CD8-positive, alpha-beta memory T cell (primary cell): ENCODE measurements at regions of chr12 and their contacts with region 1.

Region 1: GRCh38 chr12:110449799-110450497 is at the start of gene ARPC3:
- DNase-seq: peak; percentile 93 to 96 (median 93)
- H3K4me3 ChIP-seq: peak within 1 kb of the TSS; percentile 67
- H3K4me3 Mint-ChIP-seq: peak within 1 kb of the TSS; percentile 94 to 100 (median 99)
- H3K27ac ChIP-seq: peak within 1 kb of the TSS; percentile 88
- H3K27ac Mint-ChIP-seq: peak within 1 kb of the TSS; percentile 86 to 100 (median 99)
- H3K4me1 ChIP-seq: peaks cover 14% of the 10 kb centered on the region
- H3K4me1 Mint-ChIP-seq: peaks cover 33 to 50% (median 46%) of the 10 kb centered on the region in 3 donors
- H3K27me3 ChIP-seq: no peaks in the 10 kb centered on the region
- H3K27me3 Mint-ChIP-seq: peaks cover 0 to 4% of the 10 kb centered on the region in 2 donors
- total RNA-seq, gene ARPC3: 266 to 293 TPM

Region 2: DNA sequence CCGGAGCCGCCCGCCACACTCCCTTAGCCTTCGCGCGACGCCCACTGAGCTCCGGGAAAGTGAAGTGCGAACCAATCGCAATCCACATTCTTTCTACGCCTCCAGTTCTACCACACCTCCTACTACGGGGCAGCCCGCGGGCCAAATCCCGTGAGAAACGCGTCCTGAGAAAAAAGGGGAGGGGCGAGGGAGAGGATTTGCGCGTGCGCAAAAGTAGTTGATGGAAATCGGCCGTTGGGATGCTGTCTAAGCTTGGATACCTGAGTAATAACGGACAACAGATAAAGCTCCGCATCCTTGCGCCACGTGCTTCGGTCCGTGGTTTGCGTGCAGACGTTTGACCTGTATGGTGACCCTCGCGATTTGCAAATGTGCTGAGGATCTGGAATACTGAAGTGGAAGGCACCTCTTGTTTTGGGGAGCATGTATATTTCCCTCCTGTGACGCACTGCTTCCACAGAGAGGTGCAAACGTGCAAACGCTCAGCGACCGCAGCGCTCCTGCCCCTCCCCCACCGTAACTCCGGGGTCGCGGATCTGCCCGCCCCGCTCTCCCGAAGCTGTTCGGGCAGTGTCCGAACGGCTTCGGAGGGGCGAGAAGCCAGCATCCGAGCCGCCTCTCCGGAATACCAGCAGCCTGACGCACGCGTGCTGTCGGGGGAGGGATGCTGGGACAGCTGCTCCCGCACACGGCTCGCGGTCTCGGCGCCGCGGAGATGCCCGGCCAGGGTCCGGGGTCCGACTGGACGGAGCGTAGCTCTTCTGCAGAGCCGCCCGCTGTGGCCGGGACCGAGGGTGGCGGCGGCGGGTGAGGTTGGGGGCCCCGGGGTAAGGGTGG is 18.5 kb after region 1 on chr12 and contains the starts of genes FAM216A and GPN3:
- CTCF ChIA-PET with region 1: interaction called, 100 read pairs
- POLR2A ChIA-PET with region 1: interaction called, 42 read pairs
- DNase-seq: peak; percentile 90 to 98 (median 96)
- H3K4me3 ChIP-seq: peak within 1 kb of the TSS; percentile 93
- H3K4me3 Mint-ChIP-seq: peak within 1 kb of the TSS; percentile 92 to 99 (median 98)
- H3K27ac ChIP-seq: peak within 1 kb of the TSS; percentile 78
- H3K27ac Mint-ChIP-seq: peak within 1 kb of the TSS; percentile 82 to 99 (median 98)
- H3K4me1 ChIP-seq: peaks cover 25% of the 10 kb centered on the region
- H3K4me1 Mint-ChIP-seq: peaks cover 18 to 45% (median 37%) of the 10 kb centered on the region in 3 donors
- H3K27me3 ChIP-seq: no peaks in the 10 kb centered on the region
- H3K27me3 Mint-ChIP-seq: peaks cover 0 to 2% of the 10 kb centered on the region in 2 donors
- total RNA-seq, gene FAM216A: 43.2 to 44.0 TPM
- total RNA-seq, gene GPN3: 59.4 TPM

Region 3: DNA sequence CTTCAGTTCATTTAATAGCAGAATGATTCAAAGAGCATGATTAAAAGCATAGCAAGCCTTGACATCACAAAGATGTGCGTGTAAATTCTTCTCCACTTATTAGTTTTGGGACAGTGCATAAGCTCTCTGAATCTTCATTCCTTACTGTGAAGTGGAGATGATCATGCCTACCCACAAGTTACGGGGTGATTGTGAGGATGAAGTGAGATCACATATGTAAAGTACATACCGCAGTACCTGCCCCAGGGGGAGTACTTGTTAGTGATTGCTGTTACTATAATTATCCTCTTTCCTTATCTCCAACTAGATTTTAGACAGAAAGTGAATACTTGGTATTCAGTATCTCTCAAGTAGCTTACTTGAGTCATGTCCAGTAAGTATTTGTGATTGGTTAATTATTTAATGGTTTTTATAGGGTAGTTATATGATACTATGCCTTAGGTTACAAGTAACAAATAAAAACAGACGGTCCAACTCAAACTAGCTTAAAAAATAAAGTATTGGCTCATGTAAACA is 58.2 kb after region 1 on chr12:
- CTCF ChIA-PET with region 1: interaction called, 12 read pairs
- POLR2A ChIA-PET with region 1: interaction called, 3 read pairs
- DNase-seq: no peak
- H3K4me3 ChIP-seq: no peak overlapping the region
- H3K4me3 Mint-ChIP-seq: no peak overlapping the region
- H3K27ac ChIP-seq: no peak overlapping the region
- H3K27ac Mint-ChIP-seq: no peak overlapping the region
- H3K4me1 ChIP-seq: no peaks in the 10 kb centered on the region
- H3K4me1 Mint-ChIP-seq: peaks cover 0 to 3% (median 0%) of the 10 kb centered on the region in 3 donors
- H3K27me3 ChIP-seq: no peaks in the 10 kb centered on the region
- H3K27me3 Mint-ChIP-seq: no peaks in the 10 kb centered on the region

Region 4: GRCh38 chr12:110575326-110575725 is 125.4 kb after region 1 on chr12:
- CTCF ChIA-PET with region 1: no interaction called
- POLR2A ChIA-PET with region 1: no interaction called
- DNase-seq: no peak
- H3K4me3 ChIP-seq: no peak overlapping the region
- H3K4me3 Mint-ChIP-seq: peak overlapping the region in 3 of 7 donors; percentile 18 to 61 (median 43)
- H3K27ac ChIP-seq: no peak overlapping the region
- H3K27ac Mint-ChIP-seq: peak overlapping the region in 4 of 8 donors; percentile 41 to 92 (median 71)
- H3K4me1 ChIP-seq: peaks cover 56% of the 10 kb centered on the region
- H3K4me1 Mint-ChIP-seq: peaks cover 58 to 74% (median 69%) of the 10 kb centered on the region in 3 donors
- H3K27me3 ChIP-seq: no peaks in the 10 kb centered on the region
- H3K27me3 Mint-ChIP-seq: no peaks in the 10 kb centered on the region

Region 5: DNA sequence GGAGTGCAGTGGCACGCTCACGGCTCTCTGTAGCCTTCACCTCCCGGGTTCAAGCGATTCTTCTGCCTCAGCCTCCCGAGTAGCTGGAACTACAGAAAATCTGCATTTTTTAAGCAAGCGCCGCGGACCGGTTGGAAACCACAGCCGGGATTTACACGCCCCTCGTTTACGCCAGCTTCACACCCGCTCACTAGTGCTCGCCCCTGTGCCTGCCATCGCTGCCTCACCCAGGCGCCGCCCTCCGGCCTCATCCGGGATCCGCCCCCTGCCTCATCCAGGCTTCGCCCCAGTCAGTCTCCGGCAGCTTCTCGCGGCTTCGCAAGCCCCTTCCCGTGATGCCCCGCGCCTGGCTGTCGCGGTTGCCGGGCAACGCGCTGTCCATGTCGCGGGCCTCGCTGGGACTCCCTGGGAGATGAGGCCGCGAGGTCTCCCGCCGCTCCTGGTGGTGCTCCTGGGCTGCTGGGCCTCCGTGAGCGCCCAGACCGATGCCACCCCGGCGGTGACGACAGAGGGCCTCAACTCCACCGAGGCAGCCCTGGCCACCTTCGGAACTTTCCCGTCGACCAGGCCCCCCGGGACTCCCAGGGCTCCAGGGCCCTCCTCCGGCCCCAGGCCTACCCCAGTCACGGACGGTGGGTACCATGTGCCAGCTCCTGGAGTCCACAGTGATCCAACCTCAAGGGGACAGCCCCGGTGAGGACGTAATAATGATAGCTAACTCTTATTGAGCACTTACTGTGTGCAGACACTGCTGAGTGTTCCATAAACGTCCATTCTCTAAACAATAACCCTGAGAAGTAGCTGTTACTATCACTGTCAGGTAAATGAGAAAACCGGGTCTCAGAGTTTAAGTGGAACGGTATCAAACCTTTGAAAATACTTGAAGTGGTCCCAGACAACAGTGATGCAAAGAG is 164.1 kb after region 1 on chr12 and contains the start of gene TCTN1:
- CTCF ChIA-PET with region 1: interaction called, 14 read pairs
- POLR2A ChIA-PET with region 1: interaction called, 8 read pairs
- DNase-seq: peak; percentile 92 to 97 (median 94)
- H3K4me3 ChIP-seq: peak within 1 kb of the TSS; percentile 66
- H3K4me3 Mint-ChIP-seq: peak within 1 kb of the TSS; percentile 86 to 96 (median 89)
- H3K27ac ChIP-seq: peak within 1 kb of the TSS; percentile 83
- H3K27ac Mint-ChIP-seq: peak within 1 kb of the TSS; percentile 59 to 98 (median 86)
- H3K4me1 ChIP-seq: peaks cover 10% of the 10 kb centered on the region
- H3K4me1 Mint-ChIP-seq: peaks cover 3 to 11% (median 9%) of the 10 kb centered on the region in 3 donors
- H3K27me3 ChIP-seq: no peaks in the 10 kb centered on the region
- H3K27me3 Mint-ChIP-seq: no peaks in the 10 kb centered on the region
- total RNA-seq, gene TCTN1: 9.8 to 11.1 TPM